ENCODE measurements at regions of chr15 and their contacts with region 1.

Region 1: DNA sequence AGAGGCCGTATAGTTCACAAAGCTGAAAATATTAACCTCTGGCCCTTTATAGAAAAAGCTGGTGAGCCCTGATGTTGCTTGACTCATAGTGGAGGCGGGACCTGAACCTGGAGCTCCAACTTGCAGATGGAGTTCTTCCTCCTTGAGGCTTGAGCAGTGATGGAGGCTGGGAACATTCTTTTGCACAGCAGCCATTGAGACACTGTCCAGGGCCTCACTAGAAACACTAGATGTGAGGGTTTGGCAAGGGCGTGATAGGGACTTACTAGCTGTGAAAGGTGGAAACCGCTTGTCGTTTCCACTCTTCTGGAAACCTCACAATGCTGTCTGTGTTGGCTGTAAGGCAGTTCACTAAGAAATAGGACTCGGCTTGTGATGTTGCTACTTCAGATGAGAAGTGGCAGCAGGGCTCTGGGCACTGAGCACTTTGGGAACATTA is 12.5 kb downstream of the SMAD6 start:
- DNase-seq: no peak
- ATAC-seq: peak; percentile 60
- H3K4me3 ChIP-seq: no peak overlapping the region
- H3K27ac ChIP-seq: peak overlapping the region; percentile 22; the same call in 1 of the 2 replicates
- H3K4me1 ChIP-seq: peaks cover 26% of the 10 kb centered on the region
- H3K27me3 ChIP-seq: peaks cover 0 to 1% of the 10 kb centered on the region in 2 experiments; a peak in 1 of 4 replicates
- CTCF ChIP-seq: no peak
- EP300 ChIP-seq: no peak
- POLR2A ChIP-seq: no peak
- RAD21 ChIP-seq: no peak

Region 2: GRCh38 chr15:66765478-66766281 is 51.1 kb after region 1 on chr15:
- CTCF ChIA-PET with region 1: interaction called, 3 read pairs
- POLR2A ChIA-PET with region 1: no interaction called
- RAD21 ChIA-PET with region 1: no interaction called
- SMC1A ChIA-PET with region 1: no interaction called
- in situ Hi-C with region 1: no loop called
- intact Hi-C with region 1: loop called (anchors 5 kb)
- DNase-seq: peak; percentile 69
- ATAC-seq: peak; percentile 94
- H3K4me3 ChIP-seq: no peak overlapping the region
- H3K27ac ChIP-seq: no peak overlapping the region
- H3K4me1 ChIP-seq: peaks cover 9% of the 10 kb centered on the region
- H3K27me3 ChIP-seq: peaks cover 0 to 3% of the 10 kb centered on the region in 2 experiments; a peak in 1 of 4 replicates
- CTCF ChIP-seq: no peak
- EP300 ChIP-seq: peak; percentile 72 to 78; a peak in 3 of 4 replicates
- POLR2A ChIP-seq: no peak
- RAD21 ChIP-seq: no peak